Upper lobe of right lung (tissue), 1 donor: ENCODE measurements at regions of chr20 and their contacts with region 1.

Region 1: DNA sequence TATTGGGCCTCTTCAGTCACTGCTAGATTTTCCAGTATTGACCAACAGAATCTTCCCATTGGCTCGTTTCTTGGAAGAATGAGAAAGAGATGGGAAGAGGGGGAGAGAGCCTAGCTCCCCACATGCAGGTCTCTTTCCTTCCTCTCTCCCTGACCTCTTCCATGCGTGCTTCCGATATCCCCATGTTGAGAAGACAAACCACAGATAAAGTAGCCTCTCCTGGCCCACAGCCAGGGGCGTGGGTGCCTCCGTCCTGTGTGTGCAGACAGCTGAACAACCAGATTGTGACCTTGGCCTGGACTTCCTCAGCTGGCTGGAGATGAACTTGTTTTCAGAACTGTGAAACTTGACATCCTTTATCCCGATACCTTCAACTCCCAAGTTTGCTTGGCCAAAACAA is 71.0 kb downstream of the EDN3 start:
- DNase-seq: no peak
- ATAC-seq: no peak
- H3K4me3 ChIP-seq: no peak overlapping the region
- H3K27ac ChIP-seq: no peak overlapping the region
- H3K4me1 ChIP-seq: no peaks in the 10 kb centered on the region
- H3K27me3 ChIP-seq: peaks cover 13% of the 10 kb centered on the region
- CTCF ChIP-seq: no peak

Region 2: DNA sequence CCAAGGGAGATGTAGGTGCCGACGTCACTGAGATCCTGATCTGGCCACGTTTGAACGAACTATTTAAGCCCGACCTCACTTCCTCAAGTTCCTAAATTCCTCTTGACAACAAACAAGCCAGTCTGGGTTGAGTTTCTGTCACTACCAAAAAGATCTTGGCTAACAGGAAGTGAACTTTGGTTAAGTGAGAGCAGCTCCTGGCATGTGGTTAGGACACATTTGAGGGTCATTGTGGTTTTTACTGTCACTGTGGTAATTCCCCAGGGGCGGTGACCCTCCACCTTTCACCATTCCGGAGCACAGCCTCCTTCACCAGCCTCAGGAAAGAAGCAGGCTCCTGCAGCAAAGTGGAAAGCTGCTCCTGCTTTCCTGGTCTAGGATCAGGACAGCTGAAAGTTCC is 250.9 kb before region 1 on chr20:
- intact Hi-C with region 1: no loop called
- DNase-seq: no peak
- ATAC-seq: peak; percentile 69
- H3K4me3 ChIP-seq: no peak overlapping the region
- H3K27ac ChIP-seq: no peak overlapping the region
- H3K4me1 ChIP-seq: peaks cover 4% of the 10 kb centered on the region
- H3K27me3 ChIP-seq: no peaks in the 10 kb centered on the region
- CTCF ChIP-seq: no peak

Region 3: DNA sequence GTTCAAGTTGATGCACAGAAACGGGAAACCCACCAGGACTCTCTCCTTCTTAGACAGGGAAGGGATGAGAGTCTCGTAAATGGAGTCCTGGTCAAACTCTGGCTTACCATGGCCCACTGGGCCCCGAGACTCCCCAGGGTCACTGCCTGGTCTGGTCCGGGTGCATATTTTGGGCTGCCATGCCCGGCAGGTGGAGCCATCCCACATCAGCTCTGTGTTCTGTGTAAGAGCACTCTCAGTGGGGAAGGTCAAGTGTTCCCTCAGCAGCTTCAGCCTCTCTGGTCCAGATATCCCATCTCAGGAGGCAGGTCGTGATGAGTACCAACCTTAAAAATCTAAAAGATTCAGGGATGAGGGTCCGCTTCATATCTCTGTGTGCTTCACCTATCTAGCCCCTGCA is 67.8 kb after region 1 on chr20:
- intact Hi-C with region 1: loop called (anchors 10 kb)
- DNase-seq: no peak
- ATAC-seq: no peak
- H3K4me3 ChIP-seq: no peak overlapping the region
- H3K27ac ChIP-seq: no peak overlapping the region
- H3K4me1 ChIP-seq: no peaks in the 10 kb centered on the region
- H3K27me3 ChIP-seq: peaks cover 7% of the 10 kb centered on the region
- CTCF ChIP-seq: no peak